ENCODE measurements at regions of chr6 and their contacts with region 1.

Region 1: DNA sequence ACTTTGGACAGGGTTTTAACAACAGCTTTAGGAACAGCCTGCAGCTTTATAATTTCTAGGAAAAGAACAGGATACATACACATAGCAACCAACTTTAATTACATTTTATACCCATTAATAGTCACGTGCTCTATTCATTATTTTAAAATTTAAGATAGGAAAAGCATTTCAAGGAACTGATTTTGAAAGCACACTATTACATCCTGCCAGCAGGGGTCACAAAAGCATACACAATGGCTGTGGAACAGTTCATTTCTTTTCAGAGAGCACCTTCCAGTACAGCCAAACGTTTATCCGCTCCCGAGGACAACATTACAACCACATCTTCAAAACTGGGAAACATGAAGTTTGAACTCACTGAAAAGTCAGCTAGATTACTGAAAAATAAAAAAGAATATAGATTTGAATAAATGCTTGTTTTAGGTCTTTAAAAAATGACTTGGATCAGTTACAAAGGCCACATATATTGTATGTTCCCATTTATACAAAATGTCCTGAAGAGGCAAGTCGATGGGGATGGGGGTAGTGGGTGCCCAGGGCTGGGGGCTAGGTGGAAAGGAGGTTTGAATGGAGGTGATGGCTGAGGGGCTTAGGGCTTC is 104.6 kb upstream of the EXOC2 start:
- DNase-seq: peak; percentile 46
- ATAC-seq: peak; percentile 85
- H3K4me3 ChIP-seq: no peak overlapping the region
- H3K27ac ChIP-seq: no peak overlapping the region
- H3K4me1 ChIP-seq: no peaks in the 10 kb centered on the region
- H3K27me3 ChIP-seq: peaks cover 12% of the 10 kb centered on the region; the same call in 1 of the 2 replicates
- CTCF ChIP-seq: peak; percentile 82

Region 2: GRCh38 chr6:296151-297122 is 501.1 kb before region 1 on chr6:
- CTCF ChIA-PET with region 1: no interaction called
- POLR2A ChIA-PET with region 1: no interaction called
- in situ Hi-C with region 1: no loop called
- intact Hi-C with region 1: no loop called
- DNase-seq: no peak
- ATAC-seq: no peak
- H3K4me3 ChIP-seq: no peak overlapping the region
- H3K27ac ChIP-seq: no peak overlapping the region
- H3K4me1 ChIP-seq: peaks cover 5% of the 10 kb centered on the region; the same call in 1 of the 2 replicates
- H3K27me3 ChIP-seq: no peaks in the 10 kb centered on the region
- CTCF ChIP-seq: no peak

Region 3: DNA sequence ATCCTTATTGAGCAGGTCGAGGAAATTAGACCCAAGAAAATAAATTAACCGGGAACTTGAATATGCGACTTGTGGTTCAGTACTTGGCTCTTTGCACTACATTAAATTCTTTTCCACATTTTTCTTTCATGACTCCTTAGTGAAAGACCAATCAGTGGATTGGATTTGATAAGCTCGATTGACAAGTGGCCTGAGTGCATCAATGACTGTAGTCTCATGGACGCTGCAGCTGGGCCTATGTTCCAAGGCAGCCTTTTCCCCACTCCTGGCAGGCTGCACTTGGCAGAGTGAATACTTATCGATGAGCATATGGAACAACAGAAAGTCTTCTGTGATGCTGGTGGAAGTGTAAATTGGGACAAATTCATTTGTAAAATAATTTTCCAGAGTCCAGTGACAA is 106.2 kb after region 1 on chr6:
- CTCF ChIA-PET with region 1: no interaction called
- POLR2A ChIA-PET with region 1: no interaction called
- in situ Hi-C with region 1: no loop called
- intact Hi-C with region 1: loop called (anchors 5 kb)
- DNase-seq: no peak
- ATAC-seq: no peak
- H3K4me3 ChIP-seq: no peak overlapping the region
- H3K27ac ChIP-seq: no peak overlapping the region
- H3K4me1 ChIP-seq: no peaks in the 10 kb centered on the region
- H3K27me3 ChIP-seq: 0 out of 2 replicates have a peak, but pooled peaks cover 3% of the 10 kb centered on the region
- CTCF ChIP-seq: no peak

Region 4: GRCh38 chr6:1297746-1298145 is 500.2 kb after region 1 on chr6:
- CTCF ChIA-PET with region 1: interaction called, 15 read pairs
- POLR2A ChIA-PET with region 1: no interaction called
- in situ Hi-C with region 1: no loop called
- intact Hi-C with region 1: no loop called
- DNase-seq: no peak
- ATAC-seq: no peak
- H3K4me3 ChIP-seq: no peak overlapping the region
- H3K27ac ChIP-seq: no peak overlapping the region
- H3K4me1 ChIP-seq: no peaks in the 10 kb centered on the region
- H3K27me3 ChIP-seq: no peaks in the 10 kb centered on the region
- CTCF ChIP-seq: no peak

Region 5: GRCh38 chr6:1335367-1336037 is 537.9 kb after region 1 on chr6:
- CTCF ChIA-PET with region 1: interaction called, 3 read pairs
- POLR2A ChIA-PET with region 1: interaction called, 3 read pairs
- in situ Hi-C with region 1: no loop called
- intact Hi-C with region 1: loop called (anchors 1 kb)
- DNase-seq: no peak
- ATAC-seq: peak; percentile 96
- H3K4me3 ChIP-seq: peak overlapping the region; percentile 7 to 33
- H3K27ac ChIP-seq: peak overlapping the region; percentile 94
- H3K4me1 ChIP-seq: peaks cover 40% of the 10 kb centered on the region
- H3K27me3 ChIP-seq: no peaks in the 10 kb centered on the region
- CTCF ChIP-seq: no peak

Region 6: GRCh38 chr6:1381481-1382330 is 584.1 kb after region 1 on chr6:
- CTCF ChIA-PET with region 1: interaction called, 3 read pairs
- POLR2A ChIA-PET with region 1: no interaction called
- in situ Hi-C with region 1: no loop called
- intact Hi-C with region 1: loop called (anchors 5 kb)
- DNase-seq: no peak
- ATAC-seq: peak; percentile 95
- H3K4me3 ChIP-seq: peak overlapping the region; percentile 46 to 49
- H3K27ac ChIP-seq: no peak overlapping the region
- H3K4me1 ChIP-seq: peaks cover 10% of the 10 kb centered on the region
- H3K27me3 ChIP-seq: no peaks in the 10 kb centered on the region
- CTCF ChIP-seq: peak; percentile 97

Region 7: DNA sequence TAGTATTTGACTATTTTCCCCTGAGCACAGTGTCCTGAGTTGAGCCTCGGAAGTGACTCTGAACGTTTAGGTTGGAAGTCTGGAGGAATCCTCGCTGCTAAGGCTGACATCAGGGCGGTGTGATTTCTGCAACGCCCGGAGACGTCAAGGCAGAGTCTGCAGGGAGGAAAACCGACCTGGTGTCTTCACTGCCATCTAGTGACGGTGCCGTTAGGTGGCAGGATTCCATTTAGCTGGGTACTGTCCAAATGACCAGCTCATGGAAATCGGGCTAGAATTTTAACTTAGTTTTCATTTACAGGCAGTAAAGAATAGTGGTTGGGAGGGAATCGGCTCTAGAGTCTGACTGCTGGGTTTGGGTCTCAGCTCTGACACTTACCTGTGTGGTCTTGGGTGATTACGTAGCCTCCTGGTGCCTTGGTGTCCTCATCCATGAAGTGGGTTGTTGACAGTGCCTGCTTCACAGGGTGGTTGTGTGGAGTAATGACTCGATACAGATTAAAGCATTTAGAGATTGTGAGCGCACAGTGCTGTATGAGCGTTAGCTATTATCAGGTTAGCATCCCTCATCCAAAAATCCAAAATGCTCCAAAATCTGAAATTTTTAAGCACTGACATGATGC is 626.8 kb after region 1 on chr6:
- CTCF ChIA-PET with region 1: no interaction called
- POLR2A ChIA-PET with region 1: no interaction called
- in situ Hi-C with region 1: no loop called
- intact Hi-C with region 1: loop called (anchors 5 kb)
- DNase-seq: peak; percentile 36
- ATAC-seq: peak; percentile 94
- H3K4me3 ChIP-seq: no peak overlapping the region
- H3K27ac ChIP-seq: no peak overlapping the region
- H3K4me1 ChIP-seq: peaks cover 19% of the 10 kb centered on the region; the same call in 1 of the 2 replicates
- H3K27me3 ChIP-seq: no peaks in the 10 kb centered on the region
- CTCF ChIP-seq: peak; percentile 90

Region 8: GRCh38 chr6:1436334-1437306 is 639.0 kb after region 1 on chr6:
- CTCF ChIA-PET with region 1: interaction called, 9 read pairs
- POLR2A ChIA-PET with region 1: no interaction called
- in situ Hi-C with region 1: no loop called
- intact Hi-C with region 1: loop called (anchors 1 kb)
- DNase-seq: peak; percentile 53
- ATAC-seq: peak; percentile 94
- H3K4me3 ChIP-seq: 0 out of 4 replicates have a peak overlapping the region, but pooled peaks of 1 of the 2 experiments have one; percentile 9
- H3K27ac ChIP-seq: no peak overlapping the region
- H3K4me1 ChIP-seq: peaks cover 7% of the 10 kb centered on the region; the same call in 1 of the 2 replicates
- H3K27me3 ChIP-seq: no peaks in the 10 kb centered on the region
- CTCF ChIP-seq: peak; percentile 80

Measured in Panc1 (cell line).